ENCODE measurements at regions of chr12 and their contacts with region 1.

Region 1: DNA sequence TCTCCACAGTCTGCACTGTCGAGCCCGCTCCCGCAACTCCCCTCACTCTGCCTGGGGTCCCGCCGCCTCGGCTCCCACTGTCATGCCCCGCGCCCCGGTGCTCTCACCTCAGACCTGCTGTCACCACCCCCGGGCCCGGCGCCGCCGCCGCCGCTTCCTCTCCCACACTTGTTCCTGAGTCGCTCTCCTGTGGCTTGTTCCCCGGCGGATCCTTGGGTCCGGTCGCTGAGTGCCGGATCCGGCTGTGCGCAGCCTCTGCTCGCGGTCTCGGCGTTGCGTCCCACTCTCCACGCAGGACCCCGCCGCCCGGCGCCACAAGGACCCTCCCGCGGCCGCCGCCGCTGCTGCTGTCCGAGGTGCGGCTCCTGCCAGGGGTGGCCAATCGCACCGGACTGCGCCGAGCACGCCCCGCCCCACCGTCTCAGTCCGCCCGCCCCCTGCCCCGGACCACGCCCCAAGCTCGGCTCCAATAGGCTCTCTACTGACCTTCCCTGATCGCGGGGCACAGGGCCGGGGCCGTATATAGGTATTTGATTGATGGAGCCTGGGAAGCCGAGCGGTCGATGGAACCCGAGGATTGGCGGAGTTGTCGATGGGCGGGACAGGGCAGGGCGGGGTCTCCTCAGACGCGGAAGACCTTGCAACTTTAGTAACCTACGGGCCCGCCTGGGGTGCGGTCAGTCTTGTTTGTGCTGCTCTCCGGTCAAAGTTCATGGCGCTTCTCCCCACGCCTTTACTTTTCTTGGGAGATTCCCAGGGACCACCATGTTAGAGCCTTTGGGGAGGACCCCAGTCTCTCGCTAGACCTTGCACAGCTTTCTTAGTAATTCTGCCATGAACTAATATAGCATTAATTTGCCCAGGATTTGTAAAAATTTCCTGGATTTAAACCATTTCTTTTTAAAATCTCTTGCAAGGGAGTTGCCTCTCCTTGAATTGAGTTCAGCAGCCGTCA is at the start of gene TAOK3:
- DNase-seq: peak; percentile 95
- H3K4me3 ChIP-seq: peak within 1 kb of the TSS; percentile 89
- CTCF ChIP-seq: no peak

Region 2: DNA sequence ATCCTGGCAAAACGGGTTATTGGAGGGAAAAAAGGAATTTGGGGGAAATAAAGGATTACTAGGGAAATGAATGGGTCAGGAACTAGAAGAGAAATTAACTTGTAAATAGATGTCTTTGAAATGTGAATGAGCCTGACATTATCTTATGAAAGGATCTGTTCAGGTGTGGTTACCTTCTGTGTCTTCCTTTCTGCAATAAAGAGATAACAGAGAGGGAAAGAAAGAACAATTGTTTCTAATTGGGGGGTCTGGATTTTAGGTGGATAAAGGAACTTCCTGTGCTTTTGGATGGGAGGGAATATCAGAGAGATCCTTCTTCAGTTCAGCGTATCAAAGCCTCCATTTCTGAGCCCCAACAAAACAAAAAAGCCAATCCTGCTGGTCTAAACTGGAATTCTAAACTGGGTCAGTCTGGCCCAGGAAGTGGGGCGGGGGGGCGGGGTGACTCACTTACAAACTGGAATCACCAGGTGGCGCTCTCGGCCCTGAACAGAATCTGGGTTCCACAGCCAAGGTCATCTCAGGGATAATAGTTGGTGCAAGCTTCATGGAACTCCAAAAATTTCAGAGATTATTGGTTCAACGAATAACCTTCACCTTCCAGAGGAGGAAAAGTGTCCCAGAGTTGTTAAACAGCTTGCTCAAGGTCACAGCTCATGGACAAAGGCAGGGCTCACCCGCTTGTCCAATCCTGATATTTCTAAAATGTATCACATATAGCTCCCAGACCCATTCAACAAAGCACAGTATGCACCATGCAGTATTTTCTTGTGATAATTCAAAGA is 252.0 kb before region 1 on chr12:
- CTCF ChIA-PET with region 1: interaction called, 45 read pairs
- POLR2A ChIA-PET with region 1: no interaction called
- DNase-seq: no peak
- H3K4me3 ChIP-seq: no peak overlapping the region
- CTCF ChIP-seq: peak; percentile 80

Region 3: DNA sequence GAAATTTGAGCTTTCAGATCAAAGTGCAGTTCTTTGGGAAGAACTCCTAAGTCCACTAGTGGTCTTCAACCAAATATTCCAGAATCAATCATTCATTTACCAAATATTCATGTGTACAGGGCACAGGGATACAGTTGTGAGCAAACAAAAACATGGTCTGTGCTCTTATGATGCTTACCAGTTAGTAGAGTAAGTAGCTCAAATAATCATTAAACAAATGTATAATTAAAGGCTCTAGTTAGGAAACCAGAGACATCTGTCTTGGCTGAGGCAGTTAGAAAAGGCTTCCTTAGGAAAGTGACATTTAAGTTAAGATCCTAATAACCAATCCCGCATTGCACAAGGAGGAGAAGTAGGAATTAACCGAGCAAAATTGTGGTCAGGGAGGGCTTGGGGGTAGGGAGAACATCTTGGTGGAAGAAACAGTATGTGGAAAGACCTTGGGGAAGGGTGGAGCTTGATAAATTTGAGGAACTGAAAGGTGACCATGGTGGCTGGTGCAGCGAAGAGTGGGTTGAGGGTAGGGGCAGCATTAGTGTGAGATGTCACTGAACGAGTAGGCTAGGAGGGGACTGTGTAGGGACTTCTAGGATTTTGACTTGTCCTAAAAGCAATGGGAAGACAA is 196.9 kb before region 1 on chr12:
- CTCF ChIA-PET with region 1: interaction called, 589 read pairs
- POLR2A ChIA-PET with region 1: no interaction called
- DNase-seq: no peak
- H3K4me3 ChIP-seq: no peak overlapping the region
- CTCF ChIP-seq: no peak

Region 4: DNA sequence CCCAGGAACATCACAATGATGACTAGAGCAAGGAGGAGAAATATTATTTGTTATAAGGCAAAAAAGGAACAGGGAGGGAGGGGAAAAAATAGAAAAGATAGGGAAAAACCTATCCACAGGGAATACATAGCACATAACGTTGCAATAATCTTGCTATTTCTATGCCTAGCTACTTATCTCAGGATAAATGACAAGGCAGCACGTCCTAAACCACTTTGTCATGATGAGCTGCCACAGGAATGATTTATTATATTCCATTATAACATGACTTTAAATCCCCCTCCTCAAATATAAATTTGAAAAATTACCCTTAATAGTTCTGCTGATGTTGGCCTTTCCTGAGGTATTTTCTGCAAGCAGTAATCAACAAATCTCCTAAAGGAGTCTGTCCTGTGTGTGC is 160.2 kb before region 1 on chr12:
- CTCF ChIA-PET with region 1: interaction called, 16 read pairs
- POLR2A ChIA-PET with region 1: no interaction called
- DNase-seq: no peak
- H3K4me3 ChIP-seq: no peak overlapping the region
- CTCF ChIP-seq: no peak

Region 5: GRCh38 chr12:118259079-118259478 is 113.7 kb before region 1 on chr12:
- CTCF ChIA-PET with region 1: interaction called, 12 read pairs
- POLR2A ChIA-PET with region 1: no interaction called
- DNase-seq: no peak
- H3K4me3 ChIP-seq: no peak overlapping the region
- CTCF ChIP-seq: no peak

Region 6: GRCh38 chr12:118312578-118312977 is 60.2 kb before region 1 on chr12:
- CTCF ChIA-PET with region 1: interaction called, 24 read pairs
- POLR2A ChIA-PET with region 1: interaction called, 7 read pairs
- DNase-seq: no peak
- H3K4me3 ChIP-seq: no peak overlapping the region
- CTCF ChIP-seq: no peak

Region 7: GRCh38 chr12:118398940-118399339 is 26.1 kb after region 1 on chr12:
- CTCF ChIA-PET with region 1: interaction called, 97 read pairs
- POLR2A ChIA-PET with region 1: no interaction called
- DNase-seq: no peak
- H3K4me3 ChIP-seq: no peak overlapping the region
- CTCF ChIP-seq: no peak

Measured in AG04449 (cell line).